ENCODE measurements at regions of chr19 and their contacts with region 1.

Region 1: GRCh38 chr19:52734893-52735661 is at the start of gene ZNF611:
- DNase-seq: peak; percentile 97
- H3K4me3 Mint-ChIP-seq: peak within 1 kb of the TSS; percentile 89
- H3K27ac Mint-ChIP-seq: peak within 1 kb of the TSS; percentile 81
- H3K4me1 Mint-ChIP-seq: peaks cover 19% of the 10 kb centered on the region
- H3K27me3 Mint-ChIP-seq: no peaks in the 10 kb centered on the region
- total RNA-seq, gene ZNF611: 15.6 and 17.3 TPM in 2 replicates

Region 2: DNA sequence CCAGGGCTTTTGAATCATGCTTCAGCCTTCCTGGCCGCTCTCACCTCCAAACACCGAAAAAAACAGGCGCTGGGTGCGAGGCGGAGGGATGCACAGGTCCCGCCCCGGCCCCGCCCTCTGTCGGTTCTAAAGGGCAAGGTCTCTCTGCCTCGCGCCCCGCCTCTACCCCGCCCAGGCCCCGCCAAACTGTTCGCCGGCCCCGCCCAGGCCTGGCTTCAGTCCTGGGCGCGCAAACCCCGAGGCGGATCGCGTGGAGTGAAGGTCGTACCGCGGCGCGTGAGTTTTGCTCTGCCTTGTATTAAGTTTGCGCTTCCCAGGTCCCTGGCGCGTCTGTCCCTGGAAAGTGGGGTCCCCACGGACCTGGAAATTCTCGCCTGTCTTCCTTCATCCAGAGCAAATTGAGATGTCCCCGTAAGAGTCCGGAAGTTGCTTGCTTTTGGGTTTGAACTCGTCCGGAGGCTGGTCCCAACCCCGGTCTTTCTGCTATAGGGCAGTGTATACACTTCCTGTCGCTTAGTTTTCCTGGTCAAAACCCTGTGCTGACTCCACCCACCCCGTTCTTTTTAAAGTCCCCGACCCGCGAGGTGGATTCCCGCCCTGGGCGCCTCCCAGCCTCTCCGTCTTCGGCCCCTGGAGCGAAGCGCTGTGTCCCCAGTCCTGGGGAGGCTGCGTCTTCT is 199.2 kb before region 1 on chr19:
- intact Hi-C with region 1: loop called (anchors 1 kb)
- DNase-seq: peak; percentile 83
- H3K4me3 Mint-ChIP-seq: peak overlapping the region; percentile 87
- H3K27ac Mint-ChIP-seq: peak overlapping the region; percentile 91
- H3K4me1 Mint-ChIP-seq: peaks cover 15% of the 10 kb centered on the region
- H3K27me3 Mint-ChIP-seq: no peaks in the 10 kb centered on the region

Region 3: GRCh38 chr19:52778811-52779210 is 43.7 kb after region 1 on chr19:
- intact Hi-C with region 1: loop called (anchors 5 kb)
- DNase-seq: peak; percentile 9
- H3K4me3 Mint-ChIP-seq: no peak overlapping the region
- H3K27ac Mint-ChIP-seq: no peak overlapping the region
- H3K4me1 Mint-ChIP-seq: peaks cover 17% of the 10 kb centered on the region
- H3K27me3 Mint-ChIP-seq: no peaks in the 10 kb centered on the region

Region 4: DNA sequence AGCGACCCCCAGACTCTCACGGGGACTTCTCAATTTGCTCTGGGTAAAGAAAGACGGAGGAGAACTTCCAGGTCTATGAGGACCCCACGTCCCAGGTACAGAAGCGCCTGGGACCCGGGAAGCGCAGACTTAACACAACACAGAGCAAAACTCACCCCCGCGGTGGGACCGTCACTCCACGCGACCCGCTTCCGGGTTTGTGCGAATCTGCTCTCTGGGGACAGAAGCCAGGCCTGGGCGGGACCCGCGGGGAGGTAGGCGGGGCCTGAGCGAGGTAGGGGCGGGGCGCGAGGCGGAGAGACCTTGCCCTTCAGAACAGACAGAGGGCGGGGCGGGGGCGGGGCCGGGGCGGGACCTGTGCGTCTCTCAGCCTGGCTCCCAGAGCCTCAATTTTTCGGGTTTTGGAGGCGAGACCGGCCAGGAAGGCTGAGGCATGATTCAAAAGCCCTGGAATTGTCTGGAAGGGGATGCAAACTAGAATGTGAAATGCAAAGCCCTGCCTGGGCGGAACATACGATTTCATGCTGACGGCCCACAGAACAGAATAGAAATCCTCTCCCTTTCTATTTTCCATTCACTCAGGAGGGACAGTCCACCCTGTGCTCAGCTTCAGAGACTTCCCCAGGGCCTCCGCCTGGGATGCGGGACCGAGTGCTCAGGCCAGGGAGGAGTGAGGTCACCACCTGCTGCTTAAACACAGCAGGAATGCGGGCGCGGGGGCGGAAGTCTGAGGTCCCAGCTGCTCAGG is 207.5 kb after region 1 on chr19:
- intact Hi-C with region 1: loop called (anchors 2 kb)
- DNase-seq: peak; percentile 95
- H3K4me3 Mint-ChIP-seq: peak overlapping the region; percentile 90
- H3K27ac Mint-ChIP-seq: peak overlapping the region; percentile 89
- H3K4me1 Mint-ChIP-seq: peaks cover 21% of the 10 kb centered on the region
- H3K27me3 Mint-ChIP-seq: no peaks in the 10 kb centered on the region

Measured in activated T-helper 2 cell treated with anti-CD3 and anti-CD28 coated beads, Interferon-gamma antibody, Interleukin-2, Interleukin-4, amounts not matched to agents 10 μg/mL and 5 μg/mL and 100 μg/mL, durations not matched to agents 14 hours and 24 hours and 36 hours (primary cell).